ENCODE measurements at regions of chr1 and their contacts with region 1.

Region 1: GRCh38 chr1:152613511-152613910 is at the start of gene LCE3B:
- DNase-seq: no peak

Region 2: GRCh38 chr1:152582647-152583046 is 30.9 kb before region 1 on chr1:
- intact Hi-C with region 1: loop called (anchors 2 kb)
- DNase-seq: no peak

Measured in posterior cingulate gyrus (tissue), 11 donors.